ENCODE measurements at regions of chr6 and their contacts with region 1.

Region 1: GRCh38 chr6:164927288-164928056 is 381.9 kb downstream of the C6orf118 start:
- DNase-seq: peak; percentile 78 to 91 (median 86)
- H3K4me3 ChIP-seq: peak overlapping the region; percentile 39 to 80 (median 60)
- H3K27ac ChIP-seq: peak overlapping the region in 58 of 59 donors; percentile 11 to 92 (median 78)
- H3K27me3 ChIP-seq: no peaks in the 10 kb centered on the region
- CTCF ChIP-seq: peak; percentile 89 to 99 (median 98)

Region 2: DNA sequence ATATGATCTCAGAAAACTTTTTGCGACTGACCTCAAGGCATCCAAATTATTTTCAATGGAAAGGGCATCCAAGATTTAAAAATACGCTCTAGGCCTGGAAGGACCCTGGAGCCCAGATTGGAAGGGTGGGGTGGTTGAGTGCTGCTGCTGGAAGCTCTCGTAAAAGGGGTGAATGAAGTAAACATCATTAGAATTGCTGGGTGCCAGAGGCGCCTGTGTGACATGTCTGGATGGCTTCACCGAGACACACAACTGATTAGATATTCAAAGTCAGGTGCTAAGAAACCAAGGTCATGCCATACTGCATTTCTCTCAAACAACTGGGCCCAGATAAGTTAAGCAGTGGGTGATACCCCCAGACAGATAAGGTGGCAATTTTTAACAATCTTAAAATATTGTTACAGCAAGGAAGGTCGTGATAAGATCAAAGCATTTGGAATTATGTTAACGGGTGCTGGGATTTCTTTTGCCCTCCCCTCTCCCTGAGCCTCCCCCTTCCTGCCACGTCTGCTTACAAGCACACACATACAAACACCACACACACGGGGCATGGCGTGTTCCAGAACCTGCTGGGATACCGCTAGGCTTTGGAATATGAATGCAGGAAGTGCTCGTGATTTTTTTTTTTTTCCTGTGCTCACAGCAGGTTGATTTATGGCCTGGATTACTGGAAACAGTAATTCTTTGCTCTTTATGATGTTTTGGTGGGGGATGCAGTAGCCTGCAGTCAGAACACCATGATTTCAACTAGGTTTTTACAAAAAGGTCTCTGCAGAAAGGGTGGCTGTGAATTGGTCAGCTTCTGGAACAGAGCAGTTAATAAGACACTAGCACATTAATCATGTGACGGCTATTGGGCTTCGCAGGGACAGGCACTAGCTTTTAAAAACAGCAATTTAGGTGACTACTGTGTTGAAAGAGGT is 961.8 kb before region 1 on chr6:
- intact Hi-C with region 1: loop called in 1 of 2 experiments (anchors 10 kb)
- DNase-seq: no peak
- H3K4me3 ChIP-seq: no peak overlapping the region
- H3K27ac ChIP-seq: peak overlapping the region in 50 of 59 donors; percentile 1 to 87 (median 48)
- H3K27me3 ChIP-seq: peaks cover 0 to 4% (median 0%) of the 10 kb centered on the region in 45 donors
- CTCF ChIP-seq: no peak

Region 3: GRCh38 chr6:164832429-164832840 is 95.0 kb before region 1 on chr6:
- intact Hi-C with region 1: loop called in 1 of 2 experiments (anchors 5 kb)
- DNase-seq: peak in 5 of 10 donors; percentile 27 to 66 (median 53)
- H3K4me3 ChIP-seq: peak overlapping the region in 3 of 59 donors; percentile 26 to 37 (median 30)
- H3K27ac ChIP-seq: peak overlapping the region in 44 of 59 donors; percentile 1 to 84 (median 50)
- H3K27me3 ChIP-seq: no peaks in the 10 kb centered on the region
- CTCF ChIP-seq: peak in 2 of 56 donors; percentile 9 to 43

Region 4: GRCh38 chr6:165059032-165059431 is 131.6 kb after region 1 on chr6:
- intact Hi-C with region 1: no loop called
- DNase-seq: no peak
- H3K4me3 ChIP-seq: no peak overlapping the region
- H3K27ac ChIP-seq: no peak overlapping the region
- H3K27me3 ChIP-seq: no peaks in the 10 kb centered on the region
- CTCF ChIP-seq: no peak

Region 5: DNA sequence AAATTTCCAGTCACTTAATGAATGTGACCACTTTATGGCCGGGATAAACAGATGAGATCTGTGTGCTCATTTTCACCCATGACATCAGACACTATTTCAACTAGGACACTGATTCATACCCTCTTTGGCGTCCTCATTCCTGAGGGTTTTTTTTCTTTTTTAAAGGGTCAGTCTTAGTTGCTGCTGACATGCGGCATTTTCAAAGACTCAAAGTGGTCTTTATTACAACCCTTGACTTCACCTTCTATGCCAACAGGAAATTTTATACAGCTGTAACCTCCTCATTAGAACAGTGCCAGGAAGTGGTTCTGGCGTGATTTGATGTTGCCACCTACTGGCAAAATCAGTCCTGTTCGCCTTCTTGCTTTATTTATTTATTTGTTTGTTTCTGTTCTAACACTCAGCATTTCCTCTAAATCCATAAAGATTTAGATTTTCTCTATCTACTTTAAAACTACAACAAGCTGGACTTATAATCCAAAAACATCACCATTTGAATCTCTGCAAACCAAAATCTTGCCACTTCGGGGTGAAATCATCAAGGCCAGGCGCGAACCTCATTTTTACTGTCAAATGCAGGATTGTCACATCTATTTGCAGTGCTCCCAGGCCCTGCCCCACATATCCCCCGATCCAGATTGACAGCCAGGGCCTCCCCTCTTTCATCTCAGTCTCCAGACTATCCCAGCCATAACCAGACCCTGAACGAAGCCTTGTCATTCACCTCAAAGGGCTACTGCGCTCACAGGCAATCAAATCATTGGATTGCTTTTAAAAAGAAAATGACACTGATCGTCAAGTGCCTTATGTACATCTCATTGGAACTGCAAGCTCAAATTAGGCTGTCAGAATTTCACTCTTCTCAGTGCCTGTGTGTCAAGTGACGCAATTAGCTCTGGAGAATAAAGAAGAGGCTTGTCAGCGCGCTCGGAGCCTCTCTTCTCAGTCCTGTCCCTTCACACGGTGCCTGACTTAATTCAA is 304.4 kb after region 1 on chr6:
- intact Hi-C with region 1: loop called (anchors 5 kb)
- DNase-seq: peak in 4 of 10 donors; percentile 39 to 60 (median 54)
- H3K4me3 ChIP-seq: peak overlapping the region in 57 of 59 donors; percentile 1 to 67 (median 45)
- H3K27ac ChIP-seq: peak overlapping the region in 52 of 59 donors; percentile 8 to 83 (median 64)
- H3K27me3 ChIP-seq: no peaks in the 10 kb centered on the region
- CTCF ChIP-seq: peak; percentile 56 to 87 (median 76)